A549 (cell line): ENCODE measurements at regions of chr11 and their contacts with region 1.

Region 1: GRCh38 chr11:61384271-61385242 is 7.8 kb upstream of the TMEM216 start:
- DNase-seq: peak in 1 of 2 experiments; percentile 66
- ATAC-seq: peak; percentile 72 to 76
- H3K4me3 ChIP-seq: no peak overlapping the region
- H3K27ac ChIP-seq: no peak overlapping the region
- H3K4me1 ChIP-seq: peaks cover 3% of the 10 kb centered on the region; the same call in 2 of the 3 replicates
- CTCF ChIP-seq: peak; percentile 17; the same call in 1 of the 3 replicates
- EP300 ChIP-seq: no peak
- POLR2A ChIP-seq: no peak
- RAD21 ChIP-seq: peak; percentile 28 to 54; a peak in 2 of 5 replicates

Region 2: DNA sequence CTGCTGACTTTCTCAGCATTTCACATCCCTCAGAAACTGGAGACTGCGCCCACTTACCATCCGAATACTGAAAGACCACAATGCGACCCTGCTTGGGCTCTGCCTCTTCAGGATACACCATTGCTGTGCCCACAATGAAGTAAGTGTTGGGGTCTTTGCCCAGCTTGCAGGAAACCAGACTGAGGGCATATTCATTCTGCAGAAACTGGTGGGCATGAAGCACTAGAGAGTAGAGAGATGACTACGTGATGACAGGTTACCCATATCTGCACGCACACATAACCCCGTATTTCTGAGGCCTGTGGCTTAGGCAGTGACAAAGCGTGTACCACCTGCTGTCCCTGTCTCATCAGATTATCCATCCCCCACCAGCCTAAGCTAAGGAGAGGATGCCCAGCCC is 74.8 kb before region 1 on chr11:
- CTCF ChIA-PET with region 1: interaction called, 21 read pairs
- POLR2A ChIA-PET with region 1: no interaction called
- DNase-seq: no peak
- ATAC-seq: no peak
- H3K4me3 ChIP-seq: no peak overlapping the region
- H3K27ac ChIP-seq: no peak overlapping the region
- H3K4me1 ChIP-seq: no peaks in the 10 kb centered on the region
- CTCF ChIP-seq: no peak
- EP300 ChIP-seq: no peak
- POLR2A ChIP-seq: no peak
- RAD21 ChIP-seq: no peak

Region 3: GRCh38 chr11:61406067-61406466 is 21.5 kb after region 1 on chr11:
- CTCF ChIA-PET with region 1: interaction called, 32 read pairs
- POLR2A ChIA-PET with region 1: no interaction called
- DNase-seq: no peak
- ATAC-seq: no peak
- H3K4me3 ChIP-seq: no peak overlapping the region
- H3K27ac ChIP-seq: no peak overlapping the region
- H3K4me1 ChIP-seq: no peaks in the 10 kb centered on the region
- CTCF ChIP-seq: no peak
- EP300 ChIP-seq: no peak
- POLR2A ChIP-seq: no peak
- RAD21 ChIP-seq: no peak